Sigmoid colon (tissue), 7 donors: ENCODE measurements at regions of chr18 and their contacts with region 1.

Region 1: DNA sequence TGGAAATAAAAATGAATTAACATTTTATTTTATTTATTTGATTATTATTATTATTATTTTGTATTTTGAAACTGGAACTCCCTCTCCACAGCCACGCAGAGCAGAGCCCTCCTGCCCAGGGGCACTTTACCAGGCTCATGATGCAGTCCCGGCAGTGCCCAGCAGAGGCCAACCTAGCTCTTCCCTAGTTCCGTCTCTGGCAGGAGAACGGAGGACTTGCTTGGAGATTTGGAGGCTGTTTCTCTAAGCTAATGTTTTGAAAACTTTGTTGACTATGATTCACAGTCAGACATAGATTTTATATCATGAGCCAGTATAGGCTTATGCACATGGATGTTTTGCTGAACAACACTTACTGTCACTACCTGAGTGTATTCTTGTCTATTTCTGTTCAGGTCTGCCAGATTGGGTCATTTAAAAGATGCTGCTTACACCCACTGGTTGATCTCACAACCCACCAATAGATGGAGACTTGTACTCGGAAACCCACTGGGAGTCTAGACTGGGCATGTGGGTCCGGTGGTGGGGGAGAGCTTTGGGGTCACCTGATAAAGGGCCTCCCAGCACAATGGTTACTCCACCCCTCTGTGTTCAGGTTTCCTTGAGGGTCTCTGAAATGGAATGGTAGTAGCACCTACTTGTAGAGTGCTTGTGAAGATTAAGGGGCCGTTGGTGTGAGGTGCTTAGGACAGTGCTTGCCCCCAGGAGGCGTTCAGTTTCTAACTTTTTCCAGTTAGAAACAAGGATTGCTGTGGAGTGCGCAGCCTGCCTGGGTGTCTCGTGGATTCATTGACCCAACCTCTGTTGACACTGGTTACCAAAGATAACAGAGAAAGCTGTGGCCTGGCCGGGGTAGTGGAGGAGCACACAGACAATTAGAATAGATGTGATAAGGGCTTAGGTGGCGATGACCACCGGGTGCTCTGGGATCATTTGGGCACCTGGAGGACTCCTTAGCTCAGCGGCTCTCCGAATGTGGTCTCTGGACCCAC is 177.3 kb downstream of the HAUS1 start:
- DNase-seq: no peak
- H3K4me3 ChIP-seq: no peak overlapping the region
- H3K27ac ChIP-seq: no peak overlapping the region
- H3K4me1 ChIP-seq: peaks cover 0 to 5% (median 2%) of the 10 kb centered on the region in 4 donors
- H3K27me3 ChIP-seq: no peaks in the 10 kb centered on the region
- CTCF ChIP-seq: peak; percentile 62 to 94 (median 86)
- EP300 ChIP-seq: no peak
- POLR2A ChIP-seq: no peak

Region 2: GRCh38 chr18:46481048-46481846 is 199.8 kb after region 1 on chr18:
- intact Hi-C with region 1: loop called (anchors 5 kb)
- DNase-seq: no peak
- H3K4me3 ChIP-seq: no peak overlapping the region
- H3K27ac ChIP-seq: no peak overlapping the region
- H3K4me1 ChIP-seq: no peaks in the 10 kb centered on the region
- H3K27me3 ChIP-seq: no peaks in the 10 kb centered on the region
- CTCF ChIP-seq: peak in 3 of 4 experiments; percentile 61 to 70 (median 65)
- EP300 ChIP-seq: no peak
- POLR2A ChIP-seq: no peak

Region 3: GRCh38 chr18:46555724-46556123 is 274.2 kb after region 1 on chr18:
- intact Hi-C with region 1: no loop called
- DNase-seq: no peak
- H3K4me3 ChIP-seq: no peak overlapping the region
- H3K27ac ChIP-seq: no peak overlapping the region
- H3K4me1 ChIP-seq: no peaks in the 10 kb centered on the region
- H3K27me3 ChIP-seq: no peaks in the 10 kb centered on the region
- CTCF ChIP-seq: peak in 1 of 4 experiments; percentile 11
- EP300 ChIP-seq: no peak
- POLR2A ChIP-seq: no peak

Region 4: GRCh38 chr18:46660955-46661749 is 379.7 kb after region 1 on chr18:
- intact Hi-C with region 1: loop called (anchors 1 kb)
- DNase-seq: no peak
- H3K4me3 ChIP-seq: no peak overlapping the region
- H3K27ac ChIP-seq: no peak overlapping the region
- H3K4me1 ChIP-seq: no peaks in the 10 kb centered on the region
- H3K27me3 ChIP-seq: no peaks in the 10 kb centered on the region
- CTCF ChIP-seq: no peak
- EP300 ChIP-seq: no peak
- POLR2A ChIP-seq: no peak